ENCODE measurements at regions of chr4 and their contacts with region 1.

Region 1: GRCh38 chr4:16082426-16083240 is 1.2 kb downstream of the PROM1 start:
- DNase-seq: peak; percentile 16 to 25
- ATAC-seq: peak; percentile 44 to 73 (median 56)
- H3K4me3 ChIP-seq: peak overlapping the region; percentile 34 to 77 (median 58)
- H3K27ac ChIP-seq: no peak overlapping the region
- H3K4me1 ChIP-seq: peaks cover 4 to 38% (median 22%) of the 10 kb centered on the region in 9 donors
- H3K27me3 ChIP-seq: peaks cover 0 to 76% (median 55%) of the 10 kb centered on the region in 7 donors
- CTCF ChIP-seq: no peak

Region 2: GRCh38 chr4:14504162-14504561 is 1578.5 kb before region 1 on chr4:
- intact Hi-C with region 1: no loop called
- DNase-seq: no peak
- ATAC-seq: no peak
- H3K4me3 ChIP-seq: no peak overlapping the region
- H3K27ac ChIP-seq: no peak overlapping the region
- H3K4me1 ChIP-seq: no peaks in the 10 kb centered on the region
- H3K27me3 ChIP-seq: no peaks in the 10 kb centered on the region
- CTCF ChIP-seq: no peak

Region 3: DNA sequence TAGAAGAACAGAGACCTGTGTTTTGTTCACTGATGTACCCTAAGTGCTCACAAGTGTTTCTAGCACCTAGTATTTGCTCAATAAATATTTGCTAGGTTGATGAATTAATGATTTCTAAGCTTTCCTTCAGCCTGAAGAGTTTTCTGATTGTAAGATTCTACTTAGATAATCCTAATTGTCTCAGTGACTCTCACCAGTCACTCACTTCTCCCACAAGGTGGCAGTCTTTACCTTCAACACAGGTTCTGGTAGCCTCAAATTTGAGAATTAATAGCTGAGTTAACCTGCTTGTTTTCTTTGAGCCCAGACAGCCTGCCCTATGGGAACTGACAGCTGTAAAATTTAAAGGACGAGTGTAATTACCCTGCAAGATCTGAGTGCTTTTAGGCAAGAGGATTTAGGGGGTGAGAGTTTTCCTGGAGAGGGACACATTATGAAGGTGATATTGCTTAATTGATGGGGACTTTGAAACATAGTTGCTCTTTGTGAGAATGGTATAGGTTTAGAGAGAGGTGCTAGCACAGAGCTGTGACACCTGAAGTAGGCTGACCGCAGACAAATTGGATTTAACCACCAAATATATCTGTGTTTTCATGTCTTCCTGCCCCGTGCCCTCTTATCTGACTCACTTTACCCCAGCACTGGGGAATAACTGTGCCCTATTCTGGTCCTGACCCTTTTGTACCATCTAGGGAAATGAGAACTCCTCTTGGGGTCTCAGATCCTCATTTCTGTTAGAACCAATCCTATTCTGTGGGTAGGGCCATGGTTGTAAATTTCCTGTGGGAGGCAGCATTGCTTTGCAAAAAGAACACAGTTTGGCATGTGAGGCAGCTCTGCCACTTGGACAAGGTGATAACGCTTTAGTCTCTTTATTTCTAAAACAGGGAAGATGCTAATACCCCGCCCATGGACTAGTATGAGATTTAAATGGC is 276.8 kb before region 1 on chr4:
- intact Hi-C with region 1: no loop called
- DNase-seq: peak in 1 of 2 donors; percentile 30
- ATAC-seq: peak in 7 of 8 donors; percentile 15 to 78 (median 67)
- H3K4me3 ChIP-seq: no peak overlapping the region
- H3K27ac ChIP-seq: no peak overlapping the region
- H3K4me1 ChIP-seq: peaks cover 0 to 29% (median 3%) of the 10 kb centered on the region in 9 donors
- H3K27me3 ChIP-seq: no peaks in the 10 kb centered on the region
- CTCF ChIP-seq: peak; percentile 47 to 78 (median 72)

Region 4: GRCh38 chr4:16161851-16162408 is 79.3 kb after region 1 on chr4:
- intact Hi-C with region 1: loop called in 1 of 10 experiments (anchors 5 kb)
- DNase-seq: no peak
- ATAC-seq: no peak
- H3K4me3 ChIP-seq: no peak overlapping the region
- H3K27ac ChIP-seq: no peak overlapping the region
- H3K4me1 ChIP-seq: peaks cover 0 to 31% (median 3%) of the 10 kb centered on the region in 9 donors
- H3K27me3 ChIP-seq: no peaks in the 10 kb centered on the region
- CTCF ChIP-seq: peak in 2 of 9 donors; percentile 15 to 16

Region 5: GRCh38 chr4:16253127-16253960 is 170.7 kb after region 1 on chr4:
- intact Hi-C with region 1: no loop called
- DNase-seq: no peak
- ATAC-seq: no peak
- H3K4me3 ChIP-seq: no peak overlapping the region
- H3K27ac ChIP-seq: no peak overlapping the region
- H3K4me1 ChIP-seq: peaks cover 0 to 7% (median 0%) of the 10 kb centered on the region in 9 donors
- H3K27me3 ChIP-seq: no peaks in the 10 kb centered on the region
- CTCF ChIP-seq: no peak

Region 6: DNA sequence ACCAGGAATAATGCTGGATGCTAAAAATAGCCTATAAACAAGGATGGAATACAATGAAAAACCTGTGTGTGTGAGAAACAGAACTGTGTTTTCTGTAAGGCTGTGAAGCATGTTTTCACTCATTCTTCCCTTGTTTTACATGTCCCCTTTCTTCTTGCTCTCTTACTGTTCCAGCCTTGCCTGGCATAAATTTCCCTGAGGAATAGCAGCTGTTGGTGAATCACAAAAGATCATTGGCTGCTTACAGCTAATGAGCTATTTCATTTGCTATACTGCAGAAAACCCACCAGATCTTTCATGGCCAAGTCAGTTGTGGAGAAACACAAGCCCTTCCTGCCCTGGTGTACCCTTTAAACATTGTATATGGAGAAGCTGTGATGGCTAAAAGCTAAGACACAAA is 724.7 kb after region 1 on chr4:
- intact Hi-C with region 1: no loop called
- DNase-seq: no peak
- ATAC-seq: no peak
- H3K4me3 ChIP-seq: no peak overlapping the region
- H3K27ac ChIP-seq: peak overlapping the region in 1 of 10 donors; percentile 10
- H3K4me1 ChIP-seq: peaks cover 0 to 10% (median 0%) of the 10 kb centered on the region in 9 donors
- H3K27me3 ChIP-seq: no peaks in the 10 kb centered on the region
- CTCF ChIP-seq: no peak

Measured in heart right ventricle (tissue), 16 donors.